Esophagus squamous epithelium (tissue), 5 donors: ENCODE measurements at regions of chr14 and their contacts with region 1.

Region 1: DNA sequence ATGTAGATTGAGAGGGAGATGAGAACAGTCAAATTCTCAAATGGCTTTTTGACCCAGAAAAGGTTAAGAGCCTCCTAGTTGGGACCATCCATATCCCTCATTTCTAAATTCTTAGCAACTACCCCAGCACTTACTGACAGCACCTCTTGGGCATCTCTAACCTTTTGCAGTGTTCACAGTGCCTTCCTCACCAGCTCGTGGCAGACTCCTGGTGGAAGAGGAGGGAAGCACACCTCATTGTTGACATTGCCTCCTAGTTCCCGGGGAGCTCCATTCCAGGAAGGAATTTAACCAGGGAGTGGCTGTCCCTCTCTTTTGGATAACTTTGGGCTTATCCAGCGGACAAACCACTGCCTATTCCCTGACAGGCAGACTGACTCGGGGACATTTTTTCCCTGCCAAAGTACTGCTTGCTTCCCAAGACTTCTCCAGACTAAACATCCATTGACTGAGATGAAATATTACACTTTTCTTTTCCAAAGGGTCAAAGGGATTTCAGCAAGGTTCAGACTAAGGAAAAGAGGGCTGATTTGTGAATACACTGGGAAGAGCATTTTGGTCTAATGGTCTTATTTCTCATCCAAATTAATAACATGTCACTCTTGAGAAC is 9.0 kb upstream of the OR6J1 start:
- DNase-seq: no peak
- H3K4me3 ChIP-seq: no peak overlapping the region
- H3K27ac ChIP-seq: no peak overlapping the region
- H3K4me1 ChIP-seq: peaks cover 0 to 15% (median 8%) of the 10 kb centered on the region in 3 donors
- H3K27me3 ChIP-seq: no peaks in the 10 kb centered on the region
- CTCF ChIP-seq: peak in 5 of 6 experiments; percentile 76 to 90 (median 82)
- POLR2A ChIP-seq: no peak

Region 2: DNA sequence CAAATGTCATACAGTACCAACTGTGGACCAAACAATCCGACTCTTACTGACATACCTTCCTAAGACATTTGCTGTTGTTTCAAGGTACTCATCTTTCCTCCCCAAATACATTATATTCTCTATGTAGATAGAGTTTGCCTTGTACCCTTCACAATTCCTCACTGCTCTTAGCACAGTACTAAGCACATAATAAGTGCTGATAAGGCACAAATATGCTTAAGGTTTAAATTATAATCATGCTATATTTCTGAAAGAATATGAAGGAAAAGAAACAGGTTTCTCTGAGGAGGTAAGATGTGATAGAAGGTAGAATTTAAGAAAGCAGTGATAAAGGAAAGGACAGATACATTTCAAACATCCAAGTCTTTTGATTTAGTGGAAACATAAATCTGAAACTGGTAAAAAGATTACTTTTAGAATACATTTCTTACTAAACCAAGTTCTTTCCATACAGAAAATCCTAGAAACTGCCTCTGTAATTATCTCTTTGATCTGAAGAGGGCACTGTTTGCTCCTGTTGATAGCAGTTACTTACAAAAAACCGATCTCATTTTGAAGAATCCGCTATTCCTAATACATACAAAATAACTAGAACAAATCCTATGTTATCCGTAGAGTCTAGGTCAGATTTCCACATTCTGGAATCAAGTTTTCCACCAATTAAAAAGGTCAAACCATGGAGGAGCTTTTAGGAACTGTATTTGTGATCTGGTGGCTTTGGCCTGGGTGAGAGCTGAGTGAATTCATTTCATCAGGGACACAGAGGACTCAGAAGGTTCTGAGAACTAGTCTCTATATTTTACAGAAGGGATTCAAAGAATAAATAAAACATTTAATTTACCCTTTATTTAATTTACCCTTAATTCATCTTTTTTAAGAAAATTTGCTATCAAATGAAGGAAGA is 376.0 kb before region 1 on chr14:
- intact Hi-C with region 1: no loop called
- DNase-seq: no peak
- H3K4me3 ChIP-seq: no peak overlapping the region
- H3K27ac ChIP-seq: no peak overlapping the region
- H3K4me1 ChIP-seq: peaks cover 0 to 10% (median 0%) of the 10 kb centered on the region in 3 donors
- H3K27me3 ChIP-seq: peaks cover 0 to 17% (median 0%) of the 10 kb centered on the region in 4 donors
- CTCF ChIP-seq: peak in 4 of 6 experiments; percentile 26 to 55 (median 44)
- POLR2A ChIP-seq: no peak

Region 3: GRCh38 chr14:22556990-22557623 is 96.0 kb before region 1 on chr14:
- intact Hi-C with region 1: loop called (anchors 10 kb)
- DNase-seq: no peak
- H3K4me3 ChIP-seq: peak overlapping the region in 3 of 4 donors; percentile 26 to 62 (median 41)
- H3K27ac ChIP-seq: peak overlapping the region; percentile 77 to 85 (median 80)
- H3K4me1 ChIP-seq: peaks cover 26 to 76% (median 50%) of the 10 kb centered on the region in 3 donors
- H3K27me3 ChIP-seq: no peaks in the 10 kb centered on the region
- CTCF ChIP-seq: peak; percentile 99 to 100 (median 100)
- POLR2A ChIP-seq: no peak